A673 (cell line): ENCODE measurements at regions of chr12 and their contacts with region 1.

Region 1: DNA sequence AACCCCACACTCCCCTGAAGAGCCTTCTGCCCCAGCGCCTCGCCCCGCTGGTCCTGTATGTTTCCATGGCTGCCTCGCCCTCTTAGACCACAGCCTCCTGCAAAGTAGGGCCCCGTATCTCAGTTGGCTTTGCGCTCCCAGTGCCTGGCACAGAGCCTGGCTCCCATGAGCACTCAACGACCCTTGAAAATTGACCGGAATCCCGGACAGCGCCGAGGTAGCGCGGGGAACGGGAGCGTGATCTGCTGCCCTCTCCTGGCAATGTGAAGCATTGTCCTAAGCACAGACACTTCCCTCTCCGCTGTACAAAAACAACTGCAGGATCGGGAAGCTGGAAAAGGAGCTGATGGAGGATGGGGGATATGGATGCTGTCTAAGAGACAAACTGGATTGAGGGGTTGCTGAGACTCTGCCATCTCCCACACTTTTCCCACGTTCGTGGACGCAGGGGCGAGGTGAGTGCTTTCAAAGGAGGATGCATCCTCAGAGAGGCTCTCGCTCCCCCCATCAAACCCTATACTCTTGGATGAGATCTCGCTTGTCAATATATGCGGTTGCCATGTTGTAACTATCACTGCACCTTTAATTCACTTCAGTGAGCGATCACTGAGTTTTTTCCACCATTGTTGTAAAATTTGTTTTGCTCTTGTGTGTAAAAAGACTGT is 10.7 kb upstream of the FKBP4 start:
- DNase-seq: peak; percentile 69
- H3K4me3 ChIP-seq: peak overlapping the region; percentile 35
- H3K27ac ChIP-seq: no peak overlapping the region
- H3K4me1 ChIP-seq: no peaks in the 10 kb centered on the region
- H3K27me3 ChIP-seq: peaks cover 12% of the 10 kb centered on the region
- CTCF ChIP-seq: peak; percentile 96

Region 2: DNA sequence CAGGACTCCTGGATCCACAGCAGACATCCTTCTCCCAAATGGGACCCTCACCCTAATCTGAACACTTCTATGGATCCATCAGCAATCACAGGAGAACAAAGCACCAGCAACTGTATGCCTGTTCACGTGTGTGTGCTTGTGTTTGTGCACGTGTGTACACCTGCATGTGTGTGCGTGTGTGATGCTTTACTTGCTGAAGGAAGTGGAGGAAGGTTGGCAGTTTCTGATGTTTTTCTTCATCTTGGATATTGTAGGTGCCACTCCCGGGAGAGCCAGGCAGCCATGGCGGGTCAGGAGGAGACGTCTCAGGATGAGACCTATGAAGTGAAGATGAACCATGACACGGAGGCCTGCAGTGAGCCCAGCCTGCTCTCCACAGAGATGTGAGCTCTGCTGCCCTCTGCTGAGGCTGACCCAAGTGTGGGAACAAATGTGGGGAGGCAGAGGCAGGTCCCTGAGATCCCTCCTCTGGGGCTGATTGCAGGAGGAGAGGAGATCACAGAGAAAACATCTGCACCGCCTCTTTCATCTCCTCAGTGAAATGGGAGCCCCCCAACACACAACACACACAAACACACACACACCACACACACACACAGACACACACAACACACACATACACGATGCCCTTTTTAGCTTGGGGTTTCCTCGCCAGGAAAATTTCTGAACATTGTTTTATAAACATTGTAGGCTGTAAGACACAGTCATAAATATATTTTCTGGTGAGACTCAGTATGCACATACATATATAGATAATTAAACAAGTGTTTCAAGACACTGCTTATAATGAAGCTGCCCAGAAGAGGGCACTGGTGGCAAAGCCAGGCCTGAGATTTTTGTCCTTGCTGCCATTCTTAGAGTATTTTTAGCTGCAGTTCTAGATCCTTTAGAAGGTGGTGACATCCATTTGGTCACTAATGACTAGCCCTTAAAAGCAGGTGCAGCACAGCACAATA is 101.5 kb before region 1 on chr12:
- CTCF ChIA-PET with region 1: interaction called, 14 read pairs
- POLR2A ChIA-PET with region 1: no interaction called
- intact Hi-C with region 1: loop called (anchors 1 kb)
- DNase-seq: peak; percentile 71
- H3K4me3 ChIP-seq: no peak overlapping the region
- H3K27ac ChIP-seq: no peak overlapping the region
- H3K4me1 ChIP-seq: no peaks in the 10 kb centered on the region
- H3K27me3 ChIP-seq: no peaks in the 10 kb centered on the region
- CTCF ChIP-seq: peak; percentile 62

Region 3: DNA sequence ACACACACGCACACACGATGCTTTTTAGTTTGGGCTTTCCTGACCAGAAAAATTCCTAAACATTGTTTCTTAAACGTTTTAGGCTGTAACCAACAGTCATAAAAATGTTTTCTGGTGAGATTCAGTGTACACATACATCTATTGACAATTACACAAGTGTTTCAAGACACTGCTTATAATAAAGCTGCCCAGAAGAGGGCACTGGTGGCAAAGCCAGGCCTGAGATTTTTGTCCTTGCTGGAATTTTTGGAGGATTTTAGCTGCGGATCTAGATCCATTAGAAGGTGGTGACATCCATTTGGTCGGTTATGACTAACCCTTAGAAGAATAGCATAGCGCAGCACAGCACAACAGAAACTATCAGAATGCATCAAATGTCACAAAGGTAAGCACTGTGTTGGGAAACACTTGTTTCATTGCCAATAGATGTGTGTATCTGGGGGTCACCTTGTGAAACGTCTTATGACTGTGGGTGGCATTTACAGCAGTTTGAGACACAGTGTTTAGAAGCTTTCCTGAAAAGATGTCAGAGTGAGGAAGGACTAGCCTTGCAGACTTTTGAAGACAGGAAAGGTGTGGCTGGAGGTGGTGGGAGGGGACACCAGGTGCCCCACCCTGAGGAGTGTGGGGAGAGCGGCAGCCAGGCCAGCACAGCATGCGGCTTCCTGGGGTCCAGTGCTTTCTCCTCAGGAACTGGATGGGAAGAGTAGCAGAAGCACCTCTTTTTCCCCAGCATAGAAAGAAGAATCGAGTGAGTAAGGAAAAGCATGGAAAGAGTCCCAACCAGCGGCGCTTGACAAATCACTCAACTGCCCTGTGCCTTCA is 44.0 kb before region 1 on chr12:
- CTCF ChIA-PET with region 1: interaction called, 3 read pairs
- POLR2A ChIA-PET with region 1: no interaction called
- intact Hi-C with region 1: loop called (anchors 5 kb)
- DNase-seq: peak; percentile 57
- H3K4me3 ChIP-seq: no peak overlapping the region
- H3K27ac ChIP-seq: no peak overlapping the region
- H3K4me1 ChIP-seq: no peaks in the 10 kb centered on the region
- H3K27me3 ChIP-seq: peaks cover 55% of the 10 kb centered on the region
- CTCF ChIP-seq: peak; percentile 64

Region 4: DNA sequence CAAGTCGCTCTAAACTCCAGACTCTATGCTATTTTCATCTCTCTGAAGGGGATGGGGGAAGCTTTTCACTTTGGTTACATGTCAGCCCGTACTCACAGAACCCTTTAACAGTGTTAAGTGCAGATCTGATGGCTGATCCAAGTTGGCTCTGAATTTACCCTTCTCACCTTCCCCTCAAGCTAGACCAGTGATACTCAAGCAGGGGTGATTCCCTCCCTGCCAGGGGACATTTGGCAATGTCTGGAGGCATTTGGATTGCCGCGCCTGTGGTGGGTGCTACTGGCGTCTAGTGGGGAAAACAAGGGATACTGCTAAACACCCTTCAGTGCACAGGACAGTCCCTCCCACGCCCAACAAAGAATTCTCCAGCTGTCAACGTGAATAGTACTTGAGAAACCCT is 78.8 kb after region 1 on chr12:
- CTCF ChIA-PET with region 1: interaction called, 11 read pairs
- POLR2A ChIA-PET with region 1: no interaction called
- intact Hi-C with region 1: no loop called
- DNase-seq: no peak
- H3K4me3 ChIP-seq: no peak overlapping the region
- H3K27ac ChIP-seq: no peak overlapping the region
- H3K4me1 ChIP-seq: no peaks in the 10 kb centered on the region
- H3K27me3 ChIP-seq: no peaks in the 10 kb centered on the region
- CTCF ChIP-seq: no peak

Region 5: DNA sequence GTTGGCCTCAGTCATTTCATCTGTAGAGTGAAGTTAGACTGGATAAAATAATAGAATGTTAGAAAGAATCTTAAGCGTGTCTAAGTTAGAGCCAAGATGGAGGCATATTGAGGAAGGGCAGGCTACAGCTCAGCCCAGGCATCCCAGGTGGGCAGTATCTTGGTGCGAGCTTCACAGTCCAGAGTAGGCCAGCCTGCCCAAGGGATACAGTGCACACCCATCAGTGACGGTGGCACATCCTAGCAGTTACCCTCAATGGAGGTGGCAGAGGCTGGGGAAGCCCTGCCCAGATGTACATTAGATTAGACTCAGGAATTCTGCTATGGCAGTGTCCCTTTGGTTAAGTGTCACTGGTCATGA is 128.1 kb after region 1 on chr12:
- CTCF ChIA-PET with region 1: no interaction called
- POLR2A ChIA-PET with region 1: no interaction called
- intact Hi-C with region 1: no loop called
- DNase-seq: no peak
- H3K4me3 ChIP-seq: no peak overlapping the region
- H3K27ac ChIP-seq: peak overlapping the region; percentile 79
- H3K4me1 ChIP-seq: peaks cover 14% of the 10 kb centered on the region
- H3K27me3 ChIP-seq: no peaks in the 10 kb centered on the region
- CTCF ChIP-seq: no peak